ENCODE measurements at regions of chr6 and their contacts with region 1.

Region 1: DNA sequence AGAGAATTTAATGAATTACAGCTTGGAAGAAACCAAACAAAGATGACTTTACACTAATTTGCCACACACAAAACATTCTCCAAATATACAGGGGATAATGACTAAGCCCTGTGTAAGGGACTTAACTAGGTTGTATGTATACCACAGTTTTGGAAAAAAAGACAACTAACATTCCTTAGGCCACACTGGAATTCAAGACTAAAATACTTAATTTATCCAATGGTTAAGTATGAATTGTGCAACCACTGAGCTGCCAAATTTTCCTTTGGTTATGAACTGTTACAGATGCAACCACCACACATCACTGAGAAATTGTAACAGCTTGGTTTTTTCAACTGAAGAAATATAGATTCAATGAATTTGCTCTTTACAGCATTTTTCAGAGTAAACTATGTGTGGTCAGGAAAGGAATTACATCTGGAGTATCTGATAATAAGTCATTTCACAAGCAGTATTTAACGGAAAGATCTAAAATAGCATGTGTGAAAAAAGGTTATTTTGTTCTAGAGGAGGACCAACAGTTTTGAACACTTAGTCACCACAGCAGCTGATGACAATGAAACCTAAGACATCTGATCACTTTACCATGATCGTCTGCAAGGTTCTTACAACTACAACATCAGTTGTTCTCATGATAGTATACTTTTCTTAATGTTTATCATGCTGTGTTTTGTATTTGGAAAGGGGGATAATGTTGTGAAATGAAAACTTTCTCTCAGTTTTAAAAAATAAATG is 318.8 kb downstream of the BCKDHB start:
- DNase-seq: no peak
- H3K4me3 Mint-ChIP-seq: no peak overlapping the region
- H3K27ac Mint-ChIP-seq: no peak overlapping the region
- H3K4me1 Mint-ChIP-seq: no peaks in the 10 kb centered on the region
- H3K27me3 Mint-ChIP-seq: no peaks in the 10 kb centered on the region

Region 2: GRCh38 chr6:82022601-82023102 is 1597.4 kb after region 1 on chr6:
- intact Hi-C with region 1: loop called (anchors 5 kb)
- DNase-seq: no peak
- H3K4me3 Mint-ChIP-seq: no peak overlapping the region
- H3K27ac Mint-ChIP-seq: no peak overlapping the region
- H3K4me1 Mint-ChIP-seq: no peaks in the 10 kb centered on the region
- H3K27me3 Mint-ChIP-seq: no peaks in the 10 kb centered on the region